ENCODE measurements at regions of chr10 and their contacts with region 1.

Region 1: DNA sequence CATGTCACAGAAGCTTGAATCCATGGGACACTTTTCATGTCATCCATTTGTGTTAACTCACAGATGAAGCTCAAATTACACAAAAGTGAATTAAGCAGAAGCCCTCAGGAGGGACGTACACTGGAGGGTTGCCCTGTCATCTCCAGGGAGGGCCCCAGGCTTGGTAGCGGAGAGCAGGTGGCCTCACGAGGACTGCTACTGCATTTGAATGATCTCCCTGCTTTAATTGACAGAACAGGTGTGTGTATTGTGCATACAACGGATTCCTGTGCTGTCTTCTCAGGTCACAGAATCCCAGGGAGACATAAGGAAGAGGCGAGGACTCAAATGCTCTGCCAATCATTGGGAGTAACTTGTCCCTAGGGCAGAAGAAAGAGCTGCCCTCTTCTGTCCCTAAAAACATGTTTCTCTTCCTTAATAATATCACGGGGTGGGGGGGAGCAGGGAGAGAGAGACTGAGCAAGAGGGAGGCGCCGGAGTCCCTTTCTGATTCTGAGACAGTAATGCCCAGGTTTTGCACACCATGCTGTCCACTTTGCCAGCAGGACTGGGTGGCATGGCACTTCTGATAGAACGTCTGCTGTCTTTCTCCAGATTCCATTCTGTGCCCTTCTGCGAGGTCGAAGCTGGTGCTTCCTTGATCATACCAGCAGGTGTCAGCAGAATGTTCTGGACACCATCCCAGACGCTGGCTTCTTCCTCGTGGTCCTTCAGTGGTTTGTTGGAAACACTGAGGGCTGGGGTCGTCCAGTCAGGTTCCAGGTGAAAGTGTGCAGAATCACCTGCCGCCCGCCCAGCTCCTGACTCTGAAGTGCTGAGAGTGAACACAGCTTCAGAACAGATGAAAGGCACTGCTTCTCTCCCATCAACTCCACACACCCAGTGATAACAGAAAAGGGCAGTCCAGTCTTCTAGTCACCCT is 26.2 kb upstream of the RASGEF1A start:
- DNase-seq: no peak
- ATAC-seq: peak; percentile 93
- H3K4me3 ChIP-seq: no peak overlapping the region
- H3K27ac ChIP-seq: no peak overlapping the region
- H3K4me1 ChIP-seq: no peaks in the 10 kb centered on the region; the same call in 1 of the 2 replicates
- H3K27me3 ChIP-seq: no peaks in the 10 kb centered on the region
- CTCF ChIP-seq: peak; percentile 67 to 76 (median 75)
- EP300 ChIP-seq: no peak
- POLR2A ChIP-seq: no peak
- RAD21 ChIP-seq: peak; percentile 66

Region 2: GRCh38 chr10:43214071-43214943 is 78.7 kb before region 1 on chr10:
- CTCF ChIA-PET with region 1: no interaction called
- POLR2A ChIA-PET with region 1: no interaction called
- RAD21 ChIA-PET with region 1: no interaction called
- SMC1A ChIA-PET with region 1: no interaction called
- in situ Hi-C with region 1: no loop called
- intact Hi-C with region 1: no loop called
- DNase-seq: no peak
- ATAC-seq: no peak
- H3K4me3 ChIP-seq: no peak overlapping the region
- H3K27ac ChIP-seq: no peak overlapping the region
- H3K4me1 ChIP-seq: no peaks in the 10 kb centered on the region
- H3K27me3 ChIP-seq: peaks cover 0 to 1% of the 10 kb centered on the region in 2 experiments; a peak in 2 of 4 replicates
- CTCF ChIP-seq: no peak
- EP300 ChIP-seq: no peak
- POLR2A ChIP-seq: no peak
- RAD21 ChIP-seq: no peak

Region 3: DNA sequence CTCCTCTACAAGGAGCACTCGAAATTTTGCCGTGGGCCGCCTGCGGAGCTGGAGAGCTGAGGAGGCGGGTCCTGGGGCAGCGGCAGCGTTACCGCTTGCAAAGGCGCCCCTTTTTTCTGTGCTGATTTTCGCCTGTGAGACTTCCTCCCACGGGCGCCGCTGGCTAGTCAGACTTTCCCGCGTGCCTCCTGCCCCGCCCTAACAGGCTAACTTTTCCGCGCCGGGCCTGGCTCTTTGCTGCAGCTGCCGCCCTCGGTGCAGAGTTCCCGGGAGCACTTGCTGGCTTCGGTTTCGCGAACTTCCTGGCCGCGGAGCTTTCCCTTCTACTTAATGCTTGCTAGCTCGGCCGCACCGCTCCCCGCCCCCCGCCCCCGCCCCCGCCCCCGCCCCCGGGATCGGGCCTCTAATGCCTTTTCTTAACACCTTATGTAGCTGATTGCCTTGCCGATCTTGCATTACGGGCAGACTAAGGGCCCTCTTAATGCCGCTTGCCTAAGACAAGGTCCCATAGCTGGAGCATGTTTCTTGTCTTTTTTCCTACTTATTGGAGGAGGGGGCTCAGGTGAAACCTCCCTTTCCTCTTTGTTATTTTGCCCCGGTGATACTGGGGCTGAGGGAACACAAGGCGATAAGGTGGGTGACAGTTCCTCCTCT is 11.8 kb after region 1 on chr10:
- CTCF ChIA-PET with region 1: interaction called, 19 read pairs
- POLR2A ChIA-PET with region 1: no interaction called
- RAD21 ChIA-PET with region 1: interaction called, 3 read pairs
- SMC1A ChIA-PET with region 1: interaction called, 3 read pairs
- in situ Hi-C with region 1: no loop called
- intact Hi-C with region 1: no loop called
- DNase-seq: no peak
- ATAC-seq: peak; percentile 37
- H3K4me3 ChIP-seq: no peak overlapping the region
- H3K27ac ChIP-seq: no peak overlapping the region
- H3K4me1 ChIP-seq: no peaks in the 10 kb centered on the region
- H3K27me3 ChIP-seq: peaks cover 0 to 11% of the 10 kb centered on the region in 2 experiments
- CTCF ChIP-seq: no peak
- EP300 ChIP-seq: no peak
- POLR2A ChIP-seq: no peak
- RAD21 ChIP-seq: no peak

Region 4: DNA sequence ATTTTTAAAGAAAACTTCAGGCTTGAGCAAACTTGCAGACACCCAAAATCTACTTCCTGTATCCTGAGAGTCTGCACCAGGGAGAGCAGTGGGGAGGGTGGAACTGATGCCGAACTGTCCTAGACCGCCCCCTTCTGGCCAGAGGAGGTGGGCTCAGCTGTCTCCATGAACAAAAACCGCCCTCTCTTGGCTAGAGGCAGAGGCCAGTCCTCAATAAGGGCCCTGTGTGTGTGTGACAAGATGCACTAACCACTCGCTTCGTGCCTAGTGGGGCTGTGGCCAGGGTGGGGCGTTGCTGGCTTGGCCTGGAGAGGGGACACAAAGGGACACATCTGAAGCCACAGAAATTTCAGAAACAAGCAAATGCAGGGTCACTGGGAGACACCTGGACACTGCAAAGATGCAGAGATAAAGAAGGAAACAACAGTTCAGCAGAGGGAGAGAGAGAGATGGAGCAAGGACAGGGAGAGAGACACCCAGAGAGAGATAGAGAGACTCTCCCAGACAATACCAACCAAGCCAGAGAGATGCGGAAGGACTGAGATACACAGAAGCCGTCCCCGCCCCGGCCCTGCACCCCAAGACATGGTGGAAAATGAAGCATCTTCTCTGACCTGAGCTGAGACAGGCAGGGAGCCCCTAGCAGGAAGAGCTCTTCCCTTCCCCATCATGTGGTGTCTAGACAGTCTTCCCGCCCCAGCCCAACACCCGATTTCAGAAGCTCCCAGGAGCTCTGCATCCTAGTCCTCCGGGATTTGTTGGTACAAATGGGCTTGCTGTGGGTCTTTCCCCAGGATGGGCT is 55.7 kb after region 1 on chr10:
- CTCF ChIA-PET with region 1: interaction called, 16 read pairs
- POLR2A ChIA-PET with region 1: no interaction called
- RAD21 ChIA-PET with region 1: interaction called, 5 read pairs
- SMC1A ChIA-PET with region 1: interaction called, 6 read pairs
- in situ Hi-C with region 1: no loop called
- intact Hi-C with region 1: loop called (anchors 1 kb)
- DNase-seq: peak; percentile 36
- ATAC-seq: peak; percentile 100
- H3K4me3 ChIP-seq: no peak overlapping the region
- H3K27ac ChIP-seq: no peak overlapping the region
- H3K4me1 ChIP-seq: no peaks in the 10 kb centered on the region
- H3K27me3 ChIP-seq: peaks cover 0 to 2% of the 10 kb centered on the region in 2 experiments; a peak in 1 of 4 replicates
- CTCF ChIP-seq: peak; percentile 94 to 97 (median 95)
- EP300 ChIP-seq: no peak
- POLR2A ChIP-seq: no peak
- RAD21 ChIP-seq: peak; percentile 86

Region 5: GRCh38 chr10:43461950-43462349 is 168.9 kb after region 1 on chr10:
- CTCF ChIA-PET with region 1: interaction called, 3 read pairs
- POLR2A ChIA-PET with region 1: no interaction called
- RAD21 ChIA-PET with region 1: interaction called, 5 read pairs
- SMC1A ChIA-PET with region 1: interaction called, 9 read pairs
- in situ Hi-C with region 1: loop called (anchors 5 kb)
- intact Hi-C with region 1: loop called (anchors 1 kb)
- DNase-seq: no peak
- ATAC-seq: peak; percentile 95
- H3K4me3 ChIP-seq: no peak overlapping the region
- H3K27ac ChIP-seq: no peak overlapping the region
- H3K4me1 ChIP-seq: no peaks in the 10 kb centered on the region
- H3K27me3 ChIP-seq: no peaks in the 10 kb centered on the region
- CTCF ChIP-seq: peak; percentile 52 to 68 (median 56); a peak in 5 of 6 replicates
- EP300 ChIP-seq: no peak
- POLR2A ChIP-seq: no peak
- RAD21 ChIP-seq: peak; percentile 84